ENCODE measurements at regions of chr2 and their contacts with region 1.

Region 1: GRCh38 chr2:63581298-63581961 is 6.8 kb downstream of the WDPCP start:
- DNase-seq: no peak
- H3K4me3 ChIP-seq: no peak overlapping the region
- H3K27ac ChIP-seq: no peak overlapping the region
- H3K4me1 ChIP-seq: no peaks in the 10 kb centered on the region
- H3K27me3 ChIP-seq: no peaks in the 10 kb centered on the region
- CTCF ChIP-seq: no peak
- EP300 ChIP-seq: no peak
- POLR2A ChIP-seq: no peak

Region 2: GRCh38 chr2:65483763-65484162 is 1902.3 kb after region 1 on chr2:
- intact Hi-C with region 1: loop called in 1 of 4 experiments (anchors 5 kb)
- DNase-seq: no peak
- H3K4me3 ChIP-seq: no peak overlapping the region
- H3K27ac ChIP-seq: no peak overlapping the region
- H3K4me1 ChIP-seq: no peaks in the 10 kb centered on the region
- H3K27me3 ChIP-seq: no peaks in the 10 kb centered on the region
- CTCF ChIP-seq: no peak
- EP300 ChIP-seq: no peak
- POLR2A ChIP-seq: no peak

Measured in ovary (tissue), 10 donors.